Ovary (tissue), 10 donors: ENCODE measurements at regions of chr11 and their contacts with region 1.

Region 1: GRCh38 chr11:100340416-100341323 is 346.4 kb upstream of the ARHGAP42 start:
- DNase-seq: no peak
- H3K4me3 ChIP-seq: no peak overlapping the region
- H3K27ac ChIP-seq: no peak overlapping the region
- H3K4me1 ChIP-seq: no peaks in the 10 kb centered on the region
- H3K27me3 ChIP-seq: no peaks in the 10 kb centered on the region
- CTCF ChIP-seq: no peak
- EP300 ChIP-seq: no peak
- POLR2A ChIP-seq: no peak

Region 2: GRCh38 chr11:100240025-100240539 is 100.6 kb before region 1 on chr11:
- intact Hi-C with region 1: loop called in 1 of 4 experiments (anchors 2 kb)
- DNase-seq: no peak
- H3K4me3 ChIP-seq: no peak overlapping the region
- H3K27ac ChIP-seq: no peak overlapping the region
- H3K4me1 ChIP-seq: no peaks in the 10 kb centered on the region
- H3K27me3 ChIP-seq: no peaks in the 10 kb centered on the region
- CTCF ChIP-seq: no peak
- EP300 ChIP-seq: no peak
- POLR2A ChIP-seq: no peak

Region 3: DNA sequence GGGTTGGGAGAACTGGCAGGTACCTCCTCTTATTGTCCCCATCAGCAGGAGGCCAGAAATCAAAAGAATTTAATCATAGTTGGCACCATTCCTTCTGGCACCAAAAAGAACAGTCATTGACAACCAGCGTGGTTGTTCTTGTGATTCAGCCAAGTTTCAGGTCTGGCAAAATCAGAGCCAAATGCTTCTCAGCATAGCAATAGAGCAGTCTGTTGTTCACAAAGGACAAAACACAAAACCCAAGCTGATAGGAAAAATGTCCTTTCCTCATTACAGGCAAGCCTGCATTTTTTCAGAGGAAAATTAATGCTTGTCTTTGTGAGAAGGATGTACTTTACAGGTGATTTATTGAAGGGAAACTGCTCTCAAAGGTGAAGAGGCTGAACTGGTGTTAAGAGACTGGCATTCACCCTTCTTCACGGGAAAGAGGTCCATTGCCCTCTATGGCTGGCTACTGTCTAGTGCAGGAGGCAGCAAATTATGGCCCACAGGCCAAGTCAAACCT is 104.6 kb after region 1 on chr11:
- intact Hi-C with region 1: no loop called
- DNase-seq: no peak
- H3K4me3 ChIP-seq: no peak overlapping the region
- H3K27ac ChIP-seq: no peak overlapping the region
- H3K4me1 ChIP-seq: peaks cover 2% of the 10 kb centered on the region
- H3K27me3 ChIP-seq: no peaks in the 10 kb centered on the region
- CTCF ChIP-seq: no peak
- EP300 ChIP-seq: no peak
- POLR2A ChIP-seq: no peak